ENCODE measurements at regions of chr9 and their contacts with region 1.

Region 1: DNA sequence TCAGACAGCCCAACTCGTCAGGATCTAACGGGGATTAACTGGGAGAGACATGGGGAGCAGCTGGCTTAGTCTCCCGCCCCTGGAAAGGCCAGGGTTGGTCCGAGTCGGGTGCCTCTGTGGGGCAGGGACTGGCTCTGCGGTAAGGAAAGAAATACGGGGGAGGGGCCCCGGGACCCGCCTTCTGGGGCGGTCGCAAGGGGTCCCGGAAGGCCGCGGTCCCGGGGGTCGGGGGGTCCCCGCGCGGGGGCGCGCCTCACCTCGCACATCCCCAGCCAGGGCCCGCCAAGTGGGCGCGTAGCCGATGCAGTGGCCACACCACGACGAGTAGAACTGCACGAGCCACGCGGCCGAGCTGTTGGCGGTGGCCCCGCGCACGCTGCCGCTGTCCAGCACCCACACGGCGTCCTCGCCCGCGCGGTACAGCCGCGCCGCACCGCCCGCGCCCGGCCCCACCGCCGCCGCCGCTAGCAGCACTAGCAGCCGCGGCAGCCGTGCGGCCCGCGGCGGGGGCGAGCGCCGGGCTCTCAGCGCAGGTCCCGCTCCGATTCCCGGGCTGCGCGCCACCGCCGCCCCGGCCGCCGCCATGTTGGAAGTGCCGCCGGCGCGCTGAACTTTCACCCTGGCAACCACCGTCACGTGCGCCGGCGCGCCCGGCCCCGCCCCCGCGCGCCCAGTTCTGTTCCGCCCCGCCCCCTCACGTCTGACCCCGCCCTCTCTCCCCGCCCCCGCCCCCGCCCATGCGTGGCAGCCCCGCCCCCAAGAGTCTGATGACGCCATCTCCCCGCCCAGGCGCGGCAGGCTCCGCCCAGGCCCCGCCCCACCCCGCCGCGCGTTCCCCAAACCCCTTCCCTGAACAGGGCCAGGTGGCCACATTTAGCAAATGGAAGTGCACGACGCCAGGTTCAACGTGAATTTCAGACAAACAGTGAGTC is at the start of gene QSOX2:
- DNase-seq: peak; percentile 97
- H3K4me3 ChIP-seq: peak within 1 kb of the TSS; percentile 80 to 92 (median 88)
- H3K27ac ChIP-seq: peak within 1 kb of the TSS; percentile 46 to 71 (median 58)
- H3K4me1 ChIP-seq: peaks cover 23 to 39% (median 32%) of the 10 kb centered on the region in 4 donors
- H3K27me3 ChIP-seq: no peaks in the 10 kb centered on the region
- CTCF ChIP-seq: no peak
- EP300 ChIP-seq: no peak
- POLR2A ChIP-seq: no peak
- total RNA-seq, gene QSOX2: 5.4 to 7.6 (median 6.3) TPM

Region 2: DNA sequence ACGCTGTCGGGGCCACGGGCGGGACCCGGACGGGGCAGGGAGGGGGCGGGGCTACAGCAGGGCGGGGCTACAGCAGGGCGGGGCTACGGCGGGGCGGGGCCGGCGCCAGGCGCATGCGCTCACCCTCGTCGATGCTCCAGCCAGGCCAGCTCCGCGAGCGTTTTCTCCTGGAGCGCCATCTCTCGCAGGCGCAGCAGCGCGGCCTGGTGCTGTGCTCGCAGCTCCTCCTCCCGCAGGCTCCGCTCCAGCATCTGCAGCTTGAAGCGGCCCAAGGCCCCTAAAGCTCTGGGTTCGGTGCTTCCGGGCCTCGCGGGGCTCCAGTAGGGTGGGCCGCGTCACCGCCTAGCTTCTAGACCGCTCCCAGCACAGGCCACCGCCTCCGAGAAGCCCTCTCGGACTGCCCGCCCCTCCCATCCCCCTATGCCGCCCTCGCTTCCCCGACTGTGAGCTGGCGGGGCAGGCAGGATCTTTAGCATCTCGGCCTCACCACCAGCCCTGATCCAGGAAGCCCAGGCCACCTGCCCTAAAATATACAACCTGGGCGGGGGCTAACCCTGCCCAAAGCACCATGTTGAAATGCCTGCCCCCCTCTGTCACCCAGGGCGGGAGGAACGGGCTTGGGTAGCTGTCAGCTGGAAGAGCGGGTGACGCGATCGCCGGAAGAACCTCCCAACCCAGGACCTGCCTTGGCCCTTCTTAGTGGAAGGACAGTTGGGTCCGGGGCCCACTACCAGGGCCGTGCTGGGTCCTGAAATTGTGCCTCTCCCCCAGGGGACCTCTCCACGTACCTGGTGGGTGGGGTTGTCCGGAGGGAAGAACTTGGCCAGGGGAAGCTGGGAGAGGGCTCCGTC is 22.0 kb after region 1 on chr9:
- intact Hi-C with region 1: loop called (anchors 1 kb)
- DNase-seq: peak; percentile 94
- H3K4me3 ChIP-seq: peak overlapping the region; percentile 54 to 68 (median 58)
- H3K27ac ChIP-seq: peak overlapping the region; percentile 59 to 68 (median 64)
- H3K4me1 ChIP-seq: peaks cover 5 to 17% (median 14%) of the 10 kb centered on the region in 4 donors
- H3K27me3 ChIP-seq: peaks cover 0 to 6% (median 0%) of the 10 kb centered on the region in 4 donors
- CTCF ChIP-seq: peak in 2 of 3 experiments; percentile 23 to 41
- EP300 ChIP-seq: no peak
- POLR2A ChIP-seq: no peak